ENCODE measurements at regions of chr5 and their contacts with region 1.

Region 1: GRCh38 chr5:137743031-137743640 is 7.2 kb upstream of the KLHL3 start:
- DNase-seq: peak in 1 of 2 donors; percentile 22
- H3K4me3 ChIP-seq: no peak overlapping the region
- H3K27ac ChIP-seq: no peak overlapping the region
- H3K4me1 ChIP-seq: no peaks in the 10 kb centered on the region
- H3K27me3 ChIP-seq: no peaks in the 10 kb centered on the region
- CTCF ChIP-seq: peak; percentile 56 to 73

Region 2: DNA sequence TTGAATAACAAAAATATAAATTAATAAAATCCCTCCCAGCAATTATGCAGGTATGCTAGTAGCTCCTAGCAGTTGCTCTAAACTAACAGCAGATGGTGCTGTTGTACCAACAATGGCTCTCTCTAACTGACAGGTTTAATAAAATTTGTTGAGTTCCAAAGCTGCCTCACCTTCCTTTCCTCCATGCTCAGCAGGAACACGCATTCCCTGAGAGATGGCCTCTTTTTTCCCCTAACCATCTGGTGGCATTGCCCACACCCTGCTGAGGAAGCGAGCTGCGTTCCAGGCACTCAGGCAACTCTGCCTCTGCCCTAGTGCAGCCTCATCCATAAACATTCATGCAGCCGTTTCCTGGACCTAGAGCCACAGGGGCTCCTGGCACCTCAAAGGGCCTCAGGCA is 113.5 kb before region 1 on chr5:
- intact Hi-C with region 1: loop called (anchors 5 kb)
- DNase-seq: no peak
- H3K4me3 ChIP-seq: peak overlapping the region in 1 of 2 donors; percentile 9
- H3K27ac ChIP-seq: peak overlapping the region; percentile 76 to 80
- H3K4me1 ChIP-seq: peaks cover 0 to 23% (median 14%) of the 10 kb centered on the region in 4 donors
- H3K27me3 ChIP-seq: no peaks in the 10 kb centered on the region
- CTCF ChIP-seq: peak; percentile 92 to 94

Region 3: GRCh38 chr5:137659209-137659608 is 83.9 kb before region 1 on chr5:
- intact Hi-C with region 1: loop called (anchors 2 kb)
- DNase-seq: no peak
- H3K4me3 ChIP-seq: no peak overlapping the region
- H3K27ac ChIP-seq: peak overlapping the region in 1 of 2 donors; percentile 45
- H3K4me1 ChIP-seq: peaks cover 0 to 14% (median 9%) of the 10 kb centered on the region in 4 donors
- H3K27me3 ChIP-seq: no peaks in the 10 kb centered on the region
- CTCF ChIP-seq: no peak